Gastrocnemius medialis (tissue), 4 donors: ENCODE measurements at regions of chr21 and their contacts with region 1.

Region 1: DNA sequence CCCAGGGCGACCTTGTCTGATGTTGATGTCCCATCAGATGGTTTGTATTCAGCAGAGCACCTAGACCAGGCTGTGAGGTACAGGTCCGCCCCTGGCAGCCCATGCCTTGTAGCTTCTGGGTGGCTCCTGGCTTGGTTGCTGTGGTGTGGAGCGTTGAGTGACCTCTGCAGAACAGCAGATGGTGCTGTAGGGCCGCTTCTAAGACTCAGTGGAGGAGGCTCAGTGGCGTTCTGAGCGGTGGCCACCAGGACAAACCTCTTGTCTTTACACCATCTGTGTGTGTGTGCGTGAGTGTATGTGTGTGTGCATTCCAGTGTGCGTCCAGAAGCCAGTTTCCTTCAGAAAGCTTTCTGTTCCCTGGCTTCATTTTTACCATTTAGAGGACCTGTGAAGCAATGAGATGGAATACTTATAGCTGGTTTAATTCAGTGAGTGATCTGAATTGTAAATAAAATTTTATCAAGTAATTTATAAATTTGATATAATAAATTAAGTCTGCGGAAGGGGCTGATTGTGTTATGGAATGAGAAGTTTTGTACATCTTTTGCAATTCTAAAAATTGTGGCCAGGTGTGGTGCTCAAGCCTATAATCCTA is 66.1 kb downstream of the ADARB1 start:
- DNase-seq: peak; percentile 67 to 80
- ATAC-seq: peak; percentile 61 to 73
- H3K4me3 ChIP-seq: no peak overlapping the region
- H3K27ac ChIP-seq: no peak overlapping the region
- H3K4me1 ChIP-seq: peaks cover 30 to 33% of the 10 kb centered on the region in 2 donors
- H3K27me3 ChIP-seq: no peaks in the 10 kb centered on the region
- CTCF ChIP-seq: peak; percentile 61 to 85 (median 74)
- POLR2A ChIP-seq: no peak

Region 2: GRCh38 chr21:44801468-44802395 is 338.7 kb before region 1 on chr21 and contains the start of gene UBE2G2:
- in situ Hi-C with region 1: no loop called
- intact Hi-C with region 1: loop called (anchors 10 kb)
- DNase-seq: peak; percentile 59 to 74
- ATAC-seq: peak; percentile 91 to 92
- H3K4me3 ChIP-seq: peak within 1 kb of the TSS; percentile 80 to 91 (median 89)
- H3K27ac ChIP-seq: peak within 1 kb of the TSS; percentile 86 to 95 (median 90)
- H3K4me1 ChIP-seq: peaks cover 23 to 39% of the 10 kb centered on the region in 2 donors
- H3K27me3 ChIP-seq: no peaks in the 10 kb centered on the region
- CTCF ChIP-seq: no peak
- POLR2A ChIP-seq: peak; percentile 87 to 91
- total RNA-seq, gene UBE2G2: 64.2 to 83.8 (median 73.3) TPM

Region 3: DNA sequence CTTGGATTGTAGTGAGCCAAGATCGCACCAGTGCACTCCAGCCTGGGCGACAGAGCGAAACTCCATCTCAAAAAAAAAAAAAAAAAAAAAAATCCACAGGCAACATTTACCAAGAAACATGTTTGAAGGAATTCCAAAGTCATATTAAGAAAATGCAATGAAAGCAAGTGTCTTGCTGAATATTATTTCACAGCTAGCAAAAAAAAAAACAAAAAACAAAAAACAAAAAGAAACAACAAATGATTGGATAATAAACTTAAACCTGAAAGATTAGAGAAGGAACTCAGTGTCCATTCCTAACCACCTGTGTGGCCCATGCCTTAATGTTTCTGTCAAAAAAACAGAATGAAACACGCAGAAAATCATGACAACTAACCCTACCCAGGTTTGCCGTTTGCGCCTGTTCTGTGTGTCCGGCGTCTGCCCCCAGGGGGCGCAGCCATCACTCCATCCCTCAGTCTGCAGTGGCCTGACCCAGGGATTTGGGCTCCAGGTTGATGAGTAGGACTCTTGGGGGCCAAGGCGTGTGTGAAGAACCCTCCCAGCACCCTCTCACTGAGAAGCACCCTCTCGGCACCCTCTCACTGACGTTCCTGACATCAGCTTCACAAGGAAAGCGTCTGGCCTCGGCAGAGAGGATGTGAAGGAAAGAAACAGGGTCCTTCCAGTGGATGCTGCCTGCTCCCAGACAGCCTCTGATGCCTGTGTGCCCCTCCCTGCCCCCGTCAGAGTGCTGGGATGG is 247.7 kb before region 1 on chr21:
- in situ Hi-C with region 1: no loop called
- intact Hi-C with region 1: loop called (anchors 2 kb)
- DNase-seq: peak in 1 of 2 donors; percentile 48
- ATAC-seq: peak; percentile 52 to 67
- H3K4me3 ChIP-seq: no peak overlapping the region
- H3K27ac ChIP-seq: no peak overlapping the region
- H3K4me1 ChIP-seq: no peaks in the 10 kb centered on the region
- H3K27me3 ChIP-seq: peaks cover 0 to 8% (median 2%) of the 10 kb centered on the region in 3 donors
- CTCF ChIP-seq: peak; percentile 58 to 84 (median 75)
- POLR2A ChIP-seq: no peak

Region 4: DNA sequence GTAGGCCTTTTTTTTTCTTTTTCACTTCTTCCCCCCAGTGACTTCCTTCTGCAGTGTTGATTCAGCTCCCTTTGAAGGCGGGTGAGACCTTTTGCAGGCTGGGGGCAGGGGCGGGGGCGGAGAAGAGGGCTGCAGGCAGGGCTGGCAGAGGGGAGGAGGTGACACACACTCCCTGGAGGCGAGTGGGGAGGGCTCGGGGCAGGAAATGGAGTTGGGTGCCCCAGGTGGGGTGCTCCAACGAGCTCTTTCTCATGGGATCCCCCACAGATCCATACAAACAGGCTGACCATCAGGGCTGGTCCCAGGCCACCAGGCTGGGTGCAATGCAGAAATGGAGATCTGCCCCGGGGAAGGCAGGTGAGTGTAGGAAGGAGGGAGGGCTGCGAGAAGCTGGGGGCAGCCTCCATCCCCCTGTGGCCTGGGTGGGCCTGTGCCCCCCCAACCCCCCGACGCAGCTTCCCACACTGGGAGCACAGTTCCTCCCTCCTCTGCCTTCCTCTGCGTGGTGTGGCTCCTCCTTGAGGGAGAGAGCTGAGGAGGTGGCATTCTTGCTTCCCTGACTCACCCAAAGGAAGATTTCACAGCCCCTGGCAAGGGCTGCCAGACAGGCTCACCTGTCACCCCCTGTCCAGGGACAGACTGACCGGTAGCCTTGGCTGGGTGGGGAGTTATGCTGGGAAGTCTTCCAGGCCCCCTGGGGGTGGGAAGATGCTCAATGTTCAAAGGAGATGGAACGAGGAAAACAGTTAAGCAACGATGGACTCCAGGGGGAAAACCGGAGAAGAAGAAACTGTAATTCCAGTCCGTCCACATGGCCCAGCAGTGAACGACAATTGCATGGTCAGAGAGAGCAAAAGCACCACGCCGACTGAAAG is 212.6 kb before region 1 on chr21:
- in situ Hi-C with region 1: no loop called
- intact Hi-C with region 1: no loop called
- DNase-seq: no peak
- ATAC-seq: peak in 1 of 2 donors; percentile 26
- H3K4me3 ChIP-seq: no peak overlapping the region
- H3K27ac ChIP-seq: no peak overlapping the region
- H3K4me1 ChIP-seq: peaks cover 0 to 15% of the 10 kb centered on the region in 2 donors
- H3K27me3 ChIP-seq: peaks cover 40 to 50% (median 50%) of the 10 kb centered on the region in 3 donors
- CTCF ChIP-seq: no peak
- POLR2A ChIP-seq: no peak

Region 5: GRCh38 chr21:45041351-45041805 is 99.1 kb before region 1 on chr21:
- in situ Hi-C with region 1: loop called in 2 of 4 experiments (anchors 10 kb)
- intact Hi-C with region 1: no loop called
- DNase-seq: peak; percentile 73 to 93
- ATAC-seq: peak; percentile 78 to 79
- H3K4me3 ChIP-seq: peak overlapping the region in 3 of 4 donors; percentile 1 to 46 (median 9)
- H3K27ac ChIP-seq: peak overlapping the region; percentile 48 to 75 (median 68)
- H3K4me1 ChIP-seq: peaks cover 11 to 13% of the 10 kb centered on the region in 2 donors
- H3K27me3 ChIP-seq: no peaks in the 10 kb centered on the region
- CTCF ChIP-seq: no peak
- POLR2A ChIP-seq: peak; percentile 60 to 77

Region 6: GRCh38 chr21:45248893-45249381 is 108.5 kb after region 1 on chr21:
- in situ Hi-C with region 1: no loop called
- intact Hi-C with region 1: no loop called
- DNase-seq: no peak
- ATAC-seq: peak in 1 of 2 donors; percentile 50
- H3K4me3 ChIP-seq: peak overlapping the region in 2 of 4 donors; percentile 20 to 46
- H3K27ac ChIP-seq: no peak overlapping the region
- H3K4me1 ChIP-seq: peaks cover 3 to 8% of the 10 kb centered on the region in 2 donors
- H3K27me3 ChIP-seq: peaks cover 8 to 30% (median 13%) of the 10 kb centered on the region in 3 donors
- CTCF ChIP-seq: no peak
- POLR2A ChIP-seq: no peak

Region 7: DNA sequence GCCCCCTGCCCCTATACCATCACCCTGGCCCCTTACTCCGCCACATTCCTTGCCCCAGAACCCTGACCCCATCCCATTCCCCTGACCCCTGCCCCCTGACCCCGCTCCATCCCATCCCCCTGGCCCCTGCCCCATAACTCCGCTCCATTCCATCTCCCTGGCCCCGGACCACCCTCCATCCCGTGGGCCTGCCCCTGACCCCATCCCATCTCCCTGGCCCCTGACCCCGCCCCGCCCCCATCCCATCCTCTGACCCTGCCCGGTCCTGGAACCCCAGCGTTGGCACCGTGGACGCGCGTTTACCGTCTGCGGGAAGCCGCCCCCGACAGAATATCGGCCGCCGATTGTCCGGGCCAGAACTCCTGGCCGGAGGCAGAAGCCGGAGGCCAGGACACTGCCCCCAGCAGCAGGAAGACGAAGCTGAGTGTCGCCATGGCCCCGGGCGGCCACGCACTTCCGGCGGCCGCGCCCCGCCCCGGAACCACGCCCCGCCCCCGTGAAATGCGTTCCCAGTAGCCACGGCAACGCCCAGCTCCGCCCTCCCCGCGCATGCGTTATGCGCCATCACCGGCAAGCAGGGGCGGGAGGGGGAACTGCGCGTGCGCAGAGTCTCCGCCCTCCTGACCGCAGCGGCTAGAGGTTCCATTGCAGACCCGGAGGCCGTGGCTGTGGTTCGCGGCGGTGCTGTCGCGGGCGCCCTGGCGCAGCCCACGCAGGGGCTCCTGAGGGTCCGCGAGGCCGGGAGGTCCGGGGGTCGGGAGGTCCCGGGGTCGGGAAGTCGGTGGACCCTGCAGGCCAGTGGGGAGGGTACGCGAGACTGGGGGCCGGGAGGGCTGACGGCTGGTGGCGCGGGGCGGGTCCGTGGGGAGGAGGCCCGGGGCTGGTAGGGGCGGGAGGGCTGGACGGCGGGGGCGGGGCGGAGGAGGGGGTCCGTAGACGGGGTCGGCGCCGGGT is 147.3 kb after region 1 on chr21 and contains the start of gene POFUT2:
- in situ Hi-C with region 1: loop called in 1 of 4 experiments (anchors 10 kb)
- intact Hi-C with region 1: loop called (anchors 5 kb)
- DNase-seq: peak; percentile 91 to 95
- ATAC-seq: peak; percentile 92 to 96
- H3K4me3 ChIP-seq: peak within 1 kb of the TSS; percentile 84 to 94 (median 86)
- H3K27ac ChIP-seq: peak within 1 kb of the TSS; percentile 83 to 90 (median 86)
- H3K4me1 ChIP-seq: peaks cover 16 to 25% of the 10 kb centered on the region in 2 donors
- H3K27me3 ChIP-seq: no peaks in the 10 kb centered on the region
- CTCF ChIP-seq: no peak
- POLR2A ChIP-seq: peak; percentile 67 to 72
- total RNA-seq, gene POFUT2: 4.8 to 11.0 (median 5.9) TPM